ENCODE measurements at regions of chr6 and their contacts with region 1.

Region 1: DNA sequence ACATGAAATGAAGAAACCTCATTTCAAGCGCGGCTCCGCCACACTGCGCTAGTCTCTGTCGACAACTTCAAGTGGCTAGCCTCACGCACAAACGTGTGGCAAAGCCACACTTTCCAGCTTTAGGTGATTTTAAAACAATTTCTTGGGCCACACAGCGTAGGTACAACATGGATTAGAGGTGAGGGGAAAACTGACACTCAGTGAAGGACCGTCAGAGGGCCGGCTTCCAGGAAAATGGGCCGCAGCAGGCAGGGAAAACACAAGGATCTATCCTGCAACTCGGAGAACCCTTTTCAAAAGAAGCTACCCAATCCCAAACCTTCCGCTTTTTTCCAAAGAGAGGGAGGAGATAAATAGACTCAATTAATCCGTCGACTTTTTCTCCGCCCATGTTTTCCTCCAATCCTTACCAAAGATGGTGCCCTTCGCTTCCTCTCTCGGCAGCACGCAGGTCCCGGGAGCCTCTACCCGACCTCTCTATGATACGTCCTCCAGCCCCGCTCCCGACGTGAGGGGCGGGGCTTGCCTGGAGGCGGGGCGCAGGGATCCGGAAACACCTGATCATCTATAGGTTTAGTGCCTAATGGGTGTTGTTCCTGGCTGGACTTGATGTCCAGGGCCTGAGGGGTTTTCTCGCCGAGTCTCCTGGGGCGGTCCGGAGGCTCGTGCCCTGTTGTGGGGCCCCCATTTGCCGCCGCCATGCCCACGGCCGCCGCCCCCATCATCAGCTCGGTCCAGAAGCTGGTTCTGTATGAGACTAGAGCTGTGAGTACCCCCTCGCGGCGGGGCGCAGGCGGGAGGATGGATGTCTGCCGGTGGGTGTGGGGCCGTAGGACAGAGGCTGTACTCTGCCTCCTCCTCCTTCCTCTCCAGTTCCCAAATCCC is at the starts of genes AK9 and FIG4:
- DNase-seq: peak; percentile 97
- H3K4me3 Mint-ChIP-seq: peak within 1 kb of the TSS; percentile 86
- H3K27ac Mint-ChIP-seq: peak within 1 kb of the TSS; percentile 87
- H3K4me1 Mint-ChIP-seq: peaks cover 27% of the 10 kb centered on the region
- H3K27me3 Mint-ChIP-seq: peaks cover 8% of the 10 kb centered on the region
- total RNA-seq, gene AK9: 2.1 and 3.2 TPM in 2 replicates
- total RNA-seq, gene FIG4: 8.1 and 8.5 TPM in 2 replicates

Region 2: DNA sequence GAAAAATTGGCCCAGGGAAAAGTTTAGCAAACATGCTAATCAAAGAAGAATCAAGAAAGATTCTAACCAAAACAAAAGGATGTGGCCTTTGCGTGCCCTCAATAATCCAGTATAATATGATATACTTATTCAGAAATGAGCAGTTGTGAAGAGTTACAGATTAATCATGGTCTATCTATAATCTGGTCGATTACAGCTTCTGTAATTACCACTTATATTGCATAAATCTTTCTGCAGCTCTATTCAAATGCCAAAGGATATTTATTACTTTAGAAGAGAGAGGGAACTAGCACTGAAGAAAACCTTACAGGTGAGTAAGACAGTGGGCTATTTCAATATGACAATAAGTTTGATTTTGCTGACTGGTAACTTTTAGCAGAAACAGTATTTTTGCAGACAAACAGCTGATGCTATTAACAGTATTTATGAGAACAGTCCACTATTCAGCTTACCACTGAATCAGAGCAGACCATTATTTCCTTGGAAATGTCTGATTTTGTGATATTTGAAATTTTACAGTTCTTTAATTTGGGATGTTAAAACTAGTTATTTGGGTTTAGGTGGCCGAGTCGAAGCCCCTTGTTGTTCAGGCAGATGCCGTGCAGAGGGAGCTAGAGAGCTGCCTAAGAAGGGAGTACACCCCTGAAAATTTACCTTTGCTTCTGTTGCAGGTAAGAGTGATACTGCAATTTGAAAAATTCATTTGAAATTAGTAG is 503.4 kb before region 1 on chr6:
- intact Hi-C with region 1: loop called (anchors 10 kb)
- DNase-seq: peak; percentile 87
- H3K4me3 Mint-ChIP-seq: no peak overlapping the region
- H3K27ac Mint-ChIP-seq: no peak overlapping the region
- H3K4me1 Mint-ChIP-seq: no peaks in the 10 kb centered on the region
- H3K27me3 Mint-ChIP-seq: peaks cover 36% of the 10 kb centered on the region

Region 3: GRCh38 chr6:109482905-109483735 is 207.9 kb before region 1 on chr6 and contains the start of gene ZBTB24:
- intact Hi-C with region 1: loop called (anchors 2 kb)
- DNase-seq: peak; percentile 97
- H3K4me3 Mint-ChIP-seq: peak within 1 kb of the TSS; percentile 97
- H3K27ac Mint-ChIP-seq: peak within 1 kb of the TSS; percentile 93
- H3K4me1 Mint-ChIP-seq: peaks cover 41% of the 10 kb centered on the region
- H3K27me3 Mint-ChIP-seq: peaks cover 3% of the 10 kb centered on the region
- total RNA-seq, gene ZBTB24: 18.9 and 19.6 TPM in 2 replicates

Region 4: GRCh38 chr6:109595998-109596397 is 95.0 kb before region 1 on chr6:
- intact Hi-C with region 1: loop called (anchors 1 kb)
- DNase-seq: peak; percentile 63
- H3K4me3 Mint-ChIP-seq: no peak overlapping the region
- H3K27ac Mint-ChIP-seq: no peak overlapping the region
- H3K4me1 Mint-ChIP-seq: peaks cover 1% of the 10 kb centered on the region
- H3K27me3 Mint-ChIP-seq: no peaks in the 10 kb centered on the region

Region 5: GRCh38 chr6:109628158-109629000 is 62.6 kb before region 1 on chr6:
- intact Hi-C with region 1: loop called (anchors 2 kb)
- DNase-seq: no peak
- H3K4me3 Mint-ChIP-seq: no peak overlapping the region
- H3K27ac Mint-ChIP-seq: peak overlapping the region; percentile 77
- H3K4me1 Mint-ChIP-seq: peaks cover 9% of the 10 kb centered on the region
- H3K27me3 Mint-ChIP-seq: no peaks in the 10 kb centered on the region

Region 6: DNA sequence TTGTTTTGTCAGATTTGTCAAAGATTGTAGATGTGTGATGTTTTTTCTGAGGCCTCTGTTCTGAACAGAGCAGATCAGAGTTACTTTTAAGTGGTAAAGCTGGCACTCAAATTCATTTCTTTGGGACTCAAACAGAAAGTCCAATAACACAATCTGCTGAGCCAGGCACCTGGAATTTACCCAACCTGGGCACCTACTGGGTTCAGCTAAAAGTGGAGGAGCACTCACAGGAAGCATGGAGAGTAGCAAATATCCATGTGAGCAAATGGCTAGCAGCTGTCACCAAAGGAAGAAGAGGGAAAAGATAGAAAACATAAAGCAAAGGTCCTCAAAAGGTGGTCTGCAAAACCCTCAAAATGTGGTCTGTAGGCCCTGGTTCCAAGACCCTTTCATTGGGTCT is 116.9 kb after region 1 on chr6:
- intact Hi-C with region 1: no loop called
- DNase-seq: no peak
- H3K4me3 Mint-ChIP-seq: no peak overlapping the region
- H3K27ac Mint-ChIP-seq: no peak overlapping the region
- H3K4me1 Mint-ChIP-seq: peaks cover 8% of the 10 kb centered on the region
- H3K27me3 Mint-ChIP-seq: no peaks in the 10 kb centered on the region

Region 7: GRCh38 chr6:110179401-110180227 is 488.6 kb after region 1 on chr6 and contains the start of gene WASF1:
- intact Hi-C with region 1: loop called (anchors 5 kb)
- DNase-seq: peak; percentile 97
- H3K4me3 Mint-ChIP-seq: peak within 1 kb of the TSS; percentile 81
- H3K27ac Mint-ChIP-seq: peak within 1 kb of the TSS; percentile 60
- H3K4me1 Mint-ChIP-seq: peaks cover 5% of the 10 kb centered on the region
- H3K27me3 Mint-ChIP-seq: peaks cover 19% of the 10 kb centered on the region
- total RNA-seq, gene WASF1: 1.2 and 2.2 TPM in 2 replicates